Endothelial cell of umbilical vein (primary cell): ENCODE measurements at regions of chr4 and their contacts with region 1.

Region 1: GRCh38 chr4:3480528-3481112 is 17.5 kb downstream of the DOK7 start:
- DNase-seq: peak; percentile 78
- H3K4me3 ChIP-seq: no peak overlapping the region
- H3K27ac ChIP-seq: no peak overlapping the region
- H3K4me1 ChIP-seq: no peaks in the 10 kb centered on the region
- H3K27me3 ChIP-seq: peaks cover 2 to 14% of the 10 kb centered on the region in 2 experiments
- CTCF ChIP-seq: peak; percentile 98 to 100
- POLR2A ChIP-seq: no peak

Region 2: GRCh38 chr4:3106339-3107186 is 374.1 kb before region 1 on chr4:
- CTCF ChIA-PET with region 1: interaction called, 16 read pairs
- POLR2A ChIA-PET with region 1: no interaction called
- dilution Hi-C with region 1: no loop called
- intact Hi-C with region 1: loop called (anchors 1 kb)
- DNase-seq: peak; percentile 97
- H3K4me3 ChIP-seq: no peak overlapping the region
- H3K27ac ChIP-seq: peak overlapping the region; percentile 66
- H3K4me1 ChIP-seq: peaks cover 38% of the 10 kb centered on the region
- H3K27me3 ChIP-seq: no peaks in the 10 kb centered on the region
- CTCF ChIP-seq: peak; percentile 95 to 99
- POLR2A ChIP-seq: no peak

Region 3: DNA sequence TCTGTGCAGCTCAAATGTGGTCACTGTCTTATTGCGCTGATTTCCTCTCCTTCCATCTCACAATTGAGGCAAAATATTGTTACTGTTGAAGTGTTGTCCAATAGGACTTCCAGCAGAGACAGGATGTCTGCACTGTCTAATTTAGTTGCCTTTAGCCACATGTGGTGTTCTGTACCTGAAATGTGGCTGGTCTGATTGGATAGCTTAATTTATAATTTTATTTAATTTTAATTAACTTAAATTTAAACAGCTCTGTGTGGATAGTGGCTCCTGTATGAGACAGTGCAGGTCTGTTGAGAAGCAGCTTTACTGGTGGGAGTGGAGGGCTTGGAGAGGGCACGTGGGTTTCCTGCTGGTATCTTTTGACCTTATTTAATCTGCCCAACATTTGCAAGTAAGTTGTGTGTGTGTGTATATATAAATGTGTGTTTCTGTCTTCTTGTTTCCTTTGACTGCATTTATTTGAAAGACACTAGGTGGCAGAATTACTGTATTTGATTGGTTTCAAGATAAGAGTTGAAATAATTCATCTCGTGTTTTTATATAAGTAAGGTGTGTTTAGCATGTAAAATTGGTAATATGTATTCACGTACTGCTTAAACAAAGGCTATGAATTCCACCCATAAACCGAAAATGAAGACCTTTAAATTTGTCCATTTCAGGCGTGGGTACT is 287.0 kb before region 1 on chr4:
- CTCF ChIA-PET with region 1: interaction called, 69 read pairs
- POLR2A ChIA-PET with region 1: no interaction called
- dilution Hi-C with region 1: no loop called
- intact Hi-C with region 1: loop called (anchors 1 kb)
- DNase-seq: peak; percentile 44
- H3K4me3 ChIP-seq: no peak overlapping the region
- H3K27ac ChIP-seq: no peak overlapping the region
- H3K4me1 ChIP-seq: no peaks in the 10 kb centered on the region
- H3K27me3 ChIP-seq: no peaks in the 10 kb centered on the region
- CTCF ChIP-seq: peak; percentile 18 to 20
- POLR2A ChIP-seq: no peak

Region 4: GRCh38 chr4:3470244-3471097 is 10.1 kb before region 1 on chr4:
- CTCF ChIA-PET with region 1: interaction called, 16 read pairs
- POLR2A ChIA-PET with region 1: no interaction called
- dilution Hi-C with region 1: no loop called
- intact Hi-C with region 1: no loop called
- DNase-seq: peak; percentile 21
- H3K4me3 ChIP-seq: no peak overlapping the region
- H3K27ac ChIP-seq: no peak overlapping the region
- H3K4me1 ChIP-seq: no peaks in the 10 kb centered on the region
- H3K27me3 ChIP-seq: no peaks in the 10 kb centered on the region
- CTCF ChIP-seq: no peak
- POLR2A ChIP-seq: no peak

Region 5: GRCh38 chr4:3791978-3792542 is 311.4 kb after region 1 on chr4:
- CTCF ChIA-PET with region 1: no interaction called
- POLR2A ChIA-PET with region 1: no interaction called
- dilution Hi-C with region 1: no loop called
- intact Hi-C with region 1: no loop called
- DNase-seq: peak; percentile 16
- H3K4me3 ChIP-seq: no peak overlapping the region
- H3K27ac ChIP-seq: no peak overlapping the region
- H3K4me1 ChIP-seq: no peaks in the 10 kb centered on the region
- H3K27me3 ChIP-seq: no peaks in the 10 kb centered on the region
- CTCF ChIP-seq: no peak
- POLR2A ChIP-seq: no peak

Region 6: DNA sequence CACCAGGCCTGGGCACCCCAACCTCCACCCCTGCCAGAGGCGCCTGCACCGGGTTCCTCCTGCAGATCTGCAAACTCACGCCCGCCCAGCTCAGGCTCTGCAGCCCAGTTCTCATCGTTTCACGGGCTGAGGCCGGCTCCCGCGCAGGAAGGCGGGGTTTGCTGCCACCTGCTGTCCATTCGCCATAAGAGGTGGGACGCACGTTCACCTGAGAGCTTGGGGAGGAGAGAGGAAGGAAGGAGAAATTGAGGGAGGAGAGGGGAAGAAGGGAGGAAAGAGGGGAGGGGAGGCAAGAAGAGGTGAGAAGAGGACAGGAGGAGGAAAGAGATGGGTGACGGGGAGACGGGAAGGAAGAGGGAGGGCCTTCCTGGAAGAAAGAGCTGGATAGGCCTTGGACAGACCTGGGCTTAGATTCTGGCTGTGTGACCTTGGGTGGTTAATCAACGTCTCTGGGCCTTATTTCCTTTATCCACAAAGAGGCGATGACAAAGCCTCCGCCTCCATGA is 400.0 kb after region 1 on chr4:
- CTCF ChIA-PET with region 1: interaction called, 17 read pairs
- POLR2A ChIA-PET with region 1: no interaction called
- dilution Hi-C with region 1: no loop called
- intact Hi-C with region 1: no loop called
- DNase-seq: peak; percentile 55
- H3K4me3 ChIP-seq: no peak overlapping the region
- H3K27ac ChIP-seq: no peak overlapping the region
- H3K4me1 ChIP-seq: no peaks in the 10 kb centered on the region
- H3K27me3 ChIP-seq: peaks cover 12 to 19% of the 10 kb centered on the region in 2 experiments
- CTCF ChIP-seq: peak; percentile 55 to 75
- POLR2A ChIP-seq: no peak